Left ventricle myocardium superior (tissue), 1 donor: ENCODE measurements at regions of chr10 and their contacts with region 1.

Region 1: GRCh38 chr10:11986593-11987216 is 55.9 kb downstream of the UPF2 start:
- DNase-seq: peak; percentile 81
- ATAC-seq: peak; percentile 60

Region 2: GRCh38 chr10:11782793-11783557 is 203.7 kb before region 1 on chr10:
- intact Hi-C with region 1: loop called (anchors 10 kb)
- DNase-seq: no peak
- ATAC-seq: no peak

Region 3: GRCh38 chr10:12107781-12108180 is 121.1 kb after region 1 on chr10:
- intact Hi-C with region 1: no loop called
- DNase-seq: no peak
- ATAC-seq: no peak